IMR-90 (cell line): ENCODE measurements at regions of chr17 and their contacts with region 1.

Region 1: GRCh38 chr17:75405365-75406221 is at the start of gene GRB2:
- DNase-seq: peak; percentile 92
- ATAC-seq: peak; percentile 93
- H3K4me3 ChIP-seq: peak within 1 kb of the TSS; percentile 83
- H3K27ac ChIP-seq: peak within 1 kb of the TSS; percentile 83
- H3K4me1 ChIP-seq: peaks cover 4% of the 10 kb centered on the region; the same call in 1 of the 2 replicates
- H3K27me3 ChIP-seq: no peaks in the 10 kb centered on the region; the same call in 1 of the 2 replicates
- CTCF ChIP-seq: no peak
- POLR2A ChIP-seq: peak; percentile 81
- RAD21 ChIP-seq: no peak
- total RNA-seq, gene GRB2: 45.0 and 49.3 TPM in 2 replicates

Region 2: GRCh38 chr17:75059369-75060345 is 345.9 kb before region 1 on chr17:
- CTCF ChIA-PET with region 1: no interaction called
- POLR2A ChIA-PET with region 1: no interaction called
- dilution Hi-C with region 1: no loop called
- in situ Hi-C with region 1: loop called (anchors 25 kb)
- intact Hi-C with region 1: no loop called
- DNase-seq: peak; percentile 81
- ATAC-seq: peak; percentile 98
- H3K4me3 ChIP-seq: no peak overlapping the region
- H3K27ac ChIP-seq: no peak overlapping the region
- H3K4me1 ChIP-seq: peaks cover 6% of the 10 kb centered on the region; the same call in 1 of the 2 replicates
- H3K27me3 ChIP-seq: no peaks in the 10 kb centered on the region
- CTCF ChIP-seq: peak; percentile 77
- POLR2A ChIP-seq: no peak
- RAD21 ChIP-seq: peak; percentile 69

Region 3: DNA sequence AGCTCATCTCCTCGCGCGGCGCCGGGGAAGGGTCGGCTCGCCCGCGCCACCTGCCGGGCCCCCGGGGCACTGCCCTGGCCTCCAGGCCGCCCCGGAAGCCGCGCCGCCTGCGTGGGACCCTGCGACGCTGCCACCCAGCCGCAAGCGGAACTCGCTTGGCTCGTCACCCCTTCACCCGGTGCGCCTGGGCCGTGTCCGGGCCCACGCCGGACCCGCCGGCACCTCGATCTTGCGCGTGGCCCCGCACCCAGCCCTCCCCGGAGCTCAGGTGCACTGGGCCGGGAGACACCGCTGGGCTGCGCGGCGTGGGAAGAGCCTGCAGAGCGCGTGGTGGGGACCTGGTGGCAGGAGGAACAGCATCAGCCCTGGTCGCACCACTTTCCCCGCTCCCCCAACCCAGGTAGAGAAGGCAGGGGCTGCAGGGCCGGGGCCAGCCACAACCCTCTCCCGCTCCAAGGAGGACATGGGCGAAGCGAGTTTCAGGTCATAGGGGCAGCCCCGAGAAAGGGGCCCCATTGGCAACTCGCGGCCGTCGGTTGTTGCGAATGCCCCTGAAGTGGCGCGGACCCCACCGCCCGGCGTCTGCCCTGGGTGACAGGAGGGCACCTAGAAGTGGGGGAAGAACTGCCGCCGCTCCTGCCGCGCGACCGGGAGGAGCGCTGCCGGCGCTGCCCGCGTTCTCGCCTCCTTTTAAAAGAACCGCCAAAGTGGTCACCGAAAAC is 134.2 kb before region 1 on chr17:
- CTCF ChIA-PET with region 1: interaction called, 6 read pairs
- POLR2A ChIA-PET with region 1: no interaction called
- dilution Hi-C with region 1: no loop called
- in situ Hi-C with region 1: no loop called
- intact Hi-C with region 1: loop called (anchors 2 kb)
- DNase-seq: no peak
- ATAC-seq: peak; percentile 90
- H3K4me3 ChIP-seq: peak overlapping the region; percentile 81
- H3K27ac ChIP-seq: peak overlapping the region; percentile 54; the same call in 1 of the 2 replicates
- H3K4me1 ChIP-seq: peaks cover 14% of the 10 kb centered on the region
- H3K27me3 ChIP-seq: no peaks in the 10 kb centered on the region
- CTCF ChIP-seq: peak; percentile 90
- POLR2A ChIP-seq: no peak
- RAD21 ChIP-seq: peak; percentile 28; the same call in 1 of the 2 replicates

Region 4: DNA sequence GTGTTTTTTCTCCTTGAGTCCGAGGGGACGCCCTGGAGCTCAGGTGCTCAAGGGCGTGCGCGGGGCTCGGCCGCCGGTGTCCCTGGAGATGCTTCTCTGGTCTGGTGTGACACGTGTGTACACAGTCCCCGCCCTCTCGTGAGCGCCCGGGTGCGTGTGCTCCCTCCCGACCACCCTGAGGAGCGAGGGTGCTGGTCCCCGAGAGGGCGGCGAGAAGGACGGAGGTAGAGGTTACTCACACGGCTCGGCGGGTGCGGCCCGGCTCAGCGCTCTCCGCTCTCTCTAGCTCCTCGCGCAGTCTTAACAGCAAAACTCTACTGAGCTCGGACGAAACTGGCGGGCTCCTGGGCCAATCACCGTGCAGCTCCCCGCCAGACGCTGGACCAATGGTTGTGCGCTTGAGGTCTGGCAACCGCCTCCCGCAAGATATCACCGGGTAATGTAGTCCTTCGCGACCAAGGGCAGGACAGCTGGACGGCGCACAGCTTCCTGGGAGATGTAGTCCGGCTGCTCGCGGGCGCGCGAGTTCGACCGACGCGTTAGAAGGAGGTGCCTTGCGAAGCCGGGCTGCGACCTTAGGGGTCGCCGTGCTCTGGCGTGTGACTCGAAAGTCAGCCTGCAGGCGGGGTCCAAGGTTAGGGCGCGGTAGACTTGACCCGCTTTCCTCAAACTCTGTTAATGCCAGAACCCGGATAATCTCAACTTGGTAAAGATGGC is 116.3 kb before region 1 on chr17 and contains the start of gene SLC25A19:
- CTCF ChIA-PET with region 1: interaction called, 6 read pairs
- POLR2A ChIA-PET with region 1: interaction called, 3 read pairs
- dilution Hi-C with region 1: no loop called
- in situ Hi-C with region 1: no loop called
- intact Hi-C with region 1: loop called (anchors 1 kb)
- DNase-seq: peak; percentile 98
- ATAC-seq: peak; percentile 99
- H3K4me3 ChIP-seq: peak within 1 kb of the TSS; percentile 70
- H3K27ac ChIP-seq: peak within 1 kb of the TSS; percentile 73
- H3K4me1 ChIP-seq: no peaks in the 10 kb centered on the region
- H3K27me3 ChIP-seq: no peaks in the 10 kb centered on the region
- CTCF ChIP-seq: 0 out of 2 replicates have a peak, but pooled peaks have one; percentile 19
- POLR2A ChIP-seq: peak; percentile 63
- RAD21 ChIP-seq: no peak
- total RNA-seq, gene SLC25A19: 8.3 and 9.1 TPM in 2 replicates

Region 5: GRCh38 chr17:75319904-75320691 is 85.5 kb before region 1 on chr17:
- CTCF ChIA-PET with region 1: interaction called, 14 read pairs
- POLR2A ChIA-PET with region 1: no interaction called
- dilution Hi-C with region 1: no loop called
- in situ Hi-C with region 1: loop called (anchors 5 kb)
- intact Hi-C with region 1: loop called (anchors 1 kb)
- DNase-seq: peak; percentile 76
- ATAC-seq: peak; percentile 42; the same call in 1 of the 2 replicates
- H3K4me3 ChIP-seq: no peak overlapping the region
- H3K27ac ChIP-seq: no peak overlapping the region
- H3K4me1 ChIP-seq: peaks cover 7% of the 10 kb centered on the region; the same call in 1 of the 2 replicates
- H3K27me3 ChIP-seq: no peaks in the 10 kb centered on the region
- CTCF ChIP-seq: no peak
- POLR2A ChIP-seq: no peak
- RAD21 ChIP-seq: no peak

Region 6: DNA sequence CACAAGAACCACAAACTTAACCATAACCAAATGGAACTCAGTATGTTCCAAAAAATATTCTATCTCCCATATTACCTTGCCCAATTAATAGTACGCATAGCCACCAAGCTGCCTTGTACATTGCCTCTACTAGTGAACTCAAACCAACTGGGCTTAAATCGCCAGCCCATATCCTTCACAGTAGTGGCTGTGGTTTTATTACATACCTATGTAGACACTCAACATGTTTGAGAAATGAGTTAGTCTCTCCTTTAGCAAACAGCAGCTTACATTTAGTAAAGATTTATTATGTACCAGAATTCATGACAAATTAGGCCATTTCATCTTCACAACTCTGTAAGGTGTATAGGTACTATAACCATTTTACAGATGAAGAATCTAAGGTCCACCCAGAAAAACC is 41.5 kb before region 1 on chr17:
- CTCF ChIA-PET with region 1: no interaction called
- POLR2A ChIA-PET with region 1: no interaction called
- dilution Hi-C with region 1: no loop called
- in situ Hi-C with region 1: no loop called
- intact Hi-C with region 1: loop called (anchors 5 kb)
- DNase-seq: peak; percentile 84
- ATAC-seq: peak; percentile 86
- H3K4me3 ChIP-seq: no peak overlapping the region
- H3K27ac ChIP-seq: no peak overlapping the region
- H3K4me1 ChIP-seq: peaks cover 15% of the 10 kb centered on the region
- H3K27me3 ChIP-seq: no peaks in the 10 kb centered on the region
- CTCF ChIP-seq: no peak
- POLR2A ChIP-seq: no peak
- RAD21 ChIP-seq: no peak